ENCODE measurements at regions of chrX and their contacts with region 1.

Region 1: DNA sequence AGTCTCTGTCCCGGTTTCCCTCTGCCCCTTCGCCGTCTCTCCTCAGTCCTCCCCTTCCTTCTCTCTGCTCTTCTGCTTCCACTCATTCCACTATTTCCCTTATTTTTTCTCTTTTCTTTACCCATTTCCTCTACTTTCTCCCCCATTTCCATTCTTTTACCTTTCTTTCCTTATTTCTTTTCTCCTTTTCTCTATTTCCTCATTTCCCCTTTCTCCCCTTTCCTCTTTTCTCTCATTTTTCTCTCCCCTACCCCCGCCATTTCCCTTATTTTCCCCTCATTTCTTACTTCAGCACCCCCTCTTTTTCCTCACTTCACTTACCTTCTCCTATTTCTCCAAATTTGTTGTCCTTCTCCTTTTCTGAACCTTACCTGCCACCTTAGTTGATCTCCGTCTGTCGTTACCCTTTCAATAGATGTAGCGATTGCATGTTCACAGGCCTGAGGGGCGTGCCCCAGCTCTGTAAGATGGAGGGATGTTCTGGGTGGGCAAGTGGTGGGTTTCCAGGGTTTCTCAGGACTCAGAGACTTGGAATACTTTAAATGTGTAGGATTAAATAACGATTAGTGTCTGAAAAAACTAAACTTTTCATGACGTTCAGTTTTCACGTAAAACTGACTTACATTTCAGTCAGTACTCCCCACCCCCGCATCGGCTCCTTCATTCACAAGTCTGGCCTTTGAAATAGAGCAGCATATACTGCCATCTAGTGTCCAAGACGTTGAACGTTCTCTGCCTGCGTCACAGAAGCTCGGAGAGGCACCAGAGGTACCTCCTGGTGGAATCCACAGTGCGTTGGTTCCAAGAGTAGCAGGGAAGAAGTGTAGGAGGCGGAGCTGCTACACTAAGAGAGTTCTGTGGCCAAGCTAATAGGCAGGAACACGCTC is 641 bp upstream of the NCBP2L start:
- DNase-seq: peak; percentile 84 to 94
- H3K4me3 ChIP-seq: peak overlapping the region; percentile 54 to 61 (median 60)
- H3K27ac ChIP-seq: peak overlapping the region; percentile 85 to 90 (median 87)
- H3K4me1 ChIP-seq: peaks cover 4 to 19% (median 17%) of the 10 kb centered on the region in 4 donors
- H3K27me3 ChIP-seq: peaks cover 0 to 13% (median 0%) of the 10 kb centered on the region in 3 donors
- CTCF ChIP-seq: peak in 5 of 7 experiments; percentile 44 to 88 (median 67)
- EP300 ChIP-seq: no peak
- POLR2A ChIP-seq: no peak

Region 2: GRCh38 chrX:107207089-107207488 is 569.8 kb before region 1 on chrX:
- intact Hi-C with region 1: no loop called
- DNase-seq: no peak
- H3K4me3 ChIP-seq: no peak overlapping the region
- H3K27ac ChIP-seq: no peak overlapping the region
- H3K4me1 ChIP-seq: peaks cover 0 to 5% (median 0%) of the 10 kb centered on the region in 4 donors
- H3K27me3 ChIP-seq: peaks cover 0 to 4% (median 0%) of the 10 kb centered on the region in 3 donors
- CTCF ChIP-seq: no peak
- EP300 ChIP-seq: no peak
- POLR2A ChIP-seq: no peak

Region 3: DNA sequence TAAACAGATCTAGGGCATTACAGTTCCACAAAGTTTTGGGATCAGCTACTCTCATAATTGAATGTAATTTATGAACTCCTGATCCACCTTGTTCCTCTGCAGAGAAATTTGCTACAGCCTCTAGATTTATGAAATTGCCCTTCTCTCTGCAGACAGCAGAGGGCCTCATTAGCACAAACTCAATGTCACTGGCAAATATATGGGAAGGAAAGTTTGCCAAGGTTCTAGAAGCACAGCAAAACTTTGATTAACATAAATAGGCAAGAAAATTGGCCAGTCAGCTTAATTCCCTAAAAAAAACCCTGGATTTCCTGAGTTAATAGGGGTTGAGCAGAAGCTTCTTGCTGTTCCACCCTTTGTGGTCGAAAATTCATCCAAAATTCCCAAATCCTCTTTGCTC is 117.1 kb before region 1 on chrX:
- intact Hi-C with region 1: loop called (anchors 5 kb)
- DNase-seq: peak in 1 of 2 donors; percentile 78
- H3K4me3 ChIP-seq: no peak overlapping the region
- H3K27ac ChIP-seq: peak overlapping the region in 1 of 5 donors; percentile 12
- H3K4me1 ChIP-seq: peaks cover 0 to 21% (median 10%) of the 10 kb centered on the region in 4 donors
- H3K27me3 ChIP-seq: no peaks in the 10 kb centered on the region
- CTCF ChIP-seq: peak in 5 of 7 experiments; percentile 28 to 73 (median 60)
- EP300 ChIP-seq: no peak
- POLR2A ChIP-seq: no peak